ENCODE measurements at regions of chr11 and their contacts with region 1.

Region 1: DNA sequence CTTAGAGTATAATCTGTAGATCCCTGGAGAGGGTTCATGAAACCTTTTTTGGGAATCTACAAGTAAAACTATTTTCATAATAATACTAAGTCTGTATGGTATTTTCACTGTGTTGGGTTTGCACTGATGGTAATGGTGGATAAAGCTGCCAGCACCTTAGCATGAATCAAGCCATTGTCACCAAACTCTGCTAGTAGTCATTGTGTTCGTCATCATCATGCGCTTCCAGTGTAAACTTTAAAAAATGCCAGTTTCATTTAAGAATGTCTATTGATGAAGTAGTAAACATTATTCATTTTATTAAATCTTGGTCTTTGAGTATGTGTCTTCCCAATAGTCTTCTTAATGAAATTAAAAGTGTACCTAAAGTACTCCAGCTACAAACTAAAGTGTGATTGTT is 15.0 kb downstream of the ALKBH3 start:
- DNase-seq: no peak
- H3K4me3 Mint-ChIP-seq: no peak overlapping the region
- H3K27ac Mint-ChIP-seq: no peak overlapping the region
- H3K4me1 Mint-ChIP-seq: no peaks in the 10 kb centered on the region
- H3K27me3 Mint-ChIP-seq: no peaks in the 10 kb centered on the region

Region 2: DNA sequence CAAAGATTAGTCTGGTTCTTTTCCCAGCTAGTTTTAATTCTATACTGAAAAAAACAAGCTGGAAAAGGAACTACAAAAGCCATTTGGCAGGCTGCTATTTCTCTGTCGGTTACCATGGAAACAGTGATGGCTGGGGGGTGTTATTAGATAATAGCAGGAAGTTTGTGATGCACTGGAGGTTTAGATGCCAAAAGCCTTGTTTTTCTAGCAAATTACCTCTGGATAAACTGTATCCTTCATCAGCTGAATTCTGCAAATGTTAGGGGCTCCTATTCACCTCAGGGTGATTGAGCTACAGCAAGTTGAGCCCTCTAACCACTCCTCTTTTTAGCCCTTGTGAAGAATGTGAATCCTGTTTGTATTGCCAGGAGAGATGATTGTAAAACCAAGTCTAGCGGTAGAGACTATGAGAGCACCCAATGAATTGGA is 10.2 kb after region 1 on chr11:
- CTCF ChIA-PET with region 1: interaction called, 13 read pairs
- POLR2A ChIA-PET with region 1: no interaction called
- intact Hi-C with region 1: no loop called
- DNase-seq: no peak
- H3K4me3 Mint-ChIP-seq: no peak overlapping the region
- H3K27ac Mint-ChIP-seq: no peak overlapping the region
- H3K4me1 Mint-ChIP-seq: peaks cover 17% of the 10 kb centered on the region
- H3K27me3 Mint-ChIP-seq: no peaks in the 10 kb centered on the region

Region 3: DNA sequence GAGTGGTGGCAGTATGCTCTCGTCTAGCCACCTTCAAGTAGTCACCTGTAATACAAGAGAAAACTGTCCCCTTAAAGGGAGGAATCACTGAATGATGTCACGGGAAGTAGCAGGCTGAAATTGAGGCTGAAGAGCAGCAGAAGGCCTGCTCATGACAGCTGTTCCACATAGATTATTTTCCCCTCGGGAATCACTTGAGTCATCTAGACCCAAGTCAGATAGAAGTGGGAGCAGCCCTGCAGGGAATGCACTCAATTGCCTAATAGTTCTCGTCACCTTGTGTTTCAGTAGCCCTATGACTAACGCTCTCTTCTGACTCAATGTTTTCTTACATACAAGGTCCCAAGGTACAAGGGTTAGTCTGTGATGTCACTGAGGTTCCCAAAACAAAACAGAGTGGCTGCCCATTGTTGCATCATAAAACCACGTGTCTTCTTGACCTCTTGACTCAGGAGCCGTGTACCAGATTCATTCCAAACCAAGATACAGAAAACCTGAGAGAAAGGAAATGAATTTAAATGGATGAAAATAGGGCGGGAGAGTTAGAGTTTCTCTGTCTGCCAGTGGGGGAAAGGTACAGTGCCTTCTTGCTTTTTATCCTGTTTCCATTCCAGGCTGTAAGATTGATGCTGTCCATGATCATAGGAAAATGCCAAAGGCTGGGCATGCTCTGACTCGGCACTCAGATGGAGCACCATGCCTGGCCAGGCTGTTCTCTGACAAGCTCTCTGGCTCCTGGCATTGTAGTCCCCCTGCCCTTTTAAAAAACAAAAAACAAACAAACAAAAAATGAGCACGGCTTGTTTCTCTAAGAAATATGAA is 25.2 kb after region 1 on chr11:
- CTCF ChIA-PET with region 1: interaction called, 19 read pairs
- POLR2A ChIA-PET with region 1: no interaction called
- intact Hi-C with region 1: no loop called
- DNase-seq: peak; percentile 65
- H3K4me3 Mint-ChIP-seq: no peak overlapping the region
- H3K27ac Mint-ChIP-seq: no peak overlapping the region
- H3K4me1 Mint-ChIP-seq: peaks cover 20% of the 10 kb centered on the region
- H3K27me3 Mint-ChIP-seq: no peaks in the 10 kb centered on the region

Region 4: GRCh38 chr11:43944761-43945311 is 49.2 kb after region 1 on chr11:
- CTCF ChIA-PET with region 1: interaction called, 55 read pairs
- POLR2A ChIA-PET with region 1: no interaction called
- intact Hi-C with region 1: loop called (anchors 1 kb)
- DNase-seq: peak; percentile 82
- H3K4me3 Mint-ChIP-seq: peak overlapping the region; percentile 41
- H3K27ac Mint-ChIP-seq: no peak overlapping the region
- H3K4me1 Mint-ChIP-seq: peaks cover 17% of the 10 kb centered on the region
- H3K27me3 Mint-ChIP-seq: peaks cover 60% of the 10 kb centered on the region

Region 5: GRCh38 chr11:44036811-44037657 is 141.4 kb after region 1 on chr11:
- CTCF ChIA-PET with region 1: interaction called, 5 read pairs
- POLR2A ChIA-PET with region 1: no interaction called
- intact Hi-C with region 1: loop called (anchors 1 kb)
- DNase-seq: peak; percentile 54
- H3K4me3 Mint-ChIP-seq: no peak overlapping the region
- H3K27ac Mint-ChIP-seq: no peak overlapping the region
- H3K4me1 Mint-ChIP-seq: no peaks in the 10 kb centered on the region
- H3K27me3 Mint-ChIP-seq: peaks cover 4% of the 10 kb centered on the region

Region 6: GRCh38 chr11:44065841-44066731 is 170.5 kb after region 1 on chr11 and contains the start of gene ACCS:
- CTCF ChIA-PET with region 1: no interaction called
- POLR2A ChIA-PET with region 1: no interaction called
- intact Hi-C with region 1: loop called (anchors 10 kb)
- DNase-seq: peak; percentile 93
- H3K4me3 Mint-ChIP-seq: peak within 1 kb of the TSS; percentile 79
- H3K27ac Mint-ChIP-seq: peak within 1 kb of the TSS; percentile 86
- H3K4me1 Mint-ChIP-seq: peaks cover 24% of the 10 kb centered on the region
- H3K27me3 Mint-ChIP-seq: no peaks in the 10 kb centered on the region
- total RNA-seq, gene ACCS: 13.7 to 17.5 TPM